Esophagus muscularis mucosa (tissue), 4 donors: ENCODE measurements at regions of chr1 and their contacts with region 1.

Region 1: DNA sequence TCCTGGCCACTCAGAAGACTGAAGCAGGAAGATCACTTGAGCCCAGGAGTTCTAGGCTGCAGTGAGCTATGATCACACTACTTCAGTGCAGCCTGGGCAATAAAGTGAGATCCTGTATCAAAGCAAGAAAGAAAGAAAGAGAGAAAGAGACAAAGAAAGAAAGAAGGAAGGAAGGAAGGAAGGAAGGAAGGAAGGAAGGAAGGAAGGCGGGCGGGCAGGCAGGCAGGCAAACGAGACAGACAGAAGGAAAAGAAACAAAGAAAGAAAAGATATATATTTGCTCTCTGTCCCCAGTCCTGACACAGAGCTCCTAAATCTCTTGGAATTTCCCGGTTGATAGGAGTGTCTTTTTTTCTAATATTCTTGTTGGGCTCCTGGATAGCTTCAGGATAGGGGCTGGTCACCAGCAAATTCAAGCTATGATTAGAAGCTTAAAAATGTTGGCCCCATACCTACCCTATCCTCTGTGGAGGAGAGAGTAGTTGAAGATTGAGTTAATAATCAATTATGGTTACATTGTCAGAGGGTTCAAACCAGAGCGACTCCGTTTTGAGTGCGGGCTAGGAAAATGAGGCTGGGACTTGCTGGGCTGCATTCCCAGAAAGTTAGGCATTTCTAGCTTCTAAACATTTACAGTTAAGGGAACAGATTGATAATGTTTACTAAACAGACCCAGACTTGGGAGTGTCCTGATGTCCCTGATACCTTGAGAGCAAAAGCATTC is 3.3 kb upstream of the MIGA1 start:
- DNase-seq: no peak
- H3K4me3 ChIP-seq: no peak overlapping the region
- H3K27ac ChIP-seq: no peak overlapping the region
- H3K4me1 ChIP-seq: peaks cover 5 to 18% (median 17%) of the 10 kb centered on the region in 4 donors
- H3K27me3 ChIP-seq: no peaks in the 10 kb centered on the region
- CTCF ChIP-seq: no peak
- EP300 ChIP-seq: no peak
- POLR2A ChIP-seq: no peak

Region 2: DNA sequence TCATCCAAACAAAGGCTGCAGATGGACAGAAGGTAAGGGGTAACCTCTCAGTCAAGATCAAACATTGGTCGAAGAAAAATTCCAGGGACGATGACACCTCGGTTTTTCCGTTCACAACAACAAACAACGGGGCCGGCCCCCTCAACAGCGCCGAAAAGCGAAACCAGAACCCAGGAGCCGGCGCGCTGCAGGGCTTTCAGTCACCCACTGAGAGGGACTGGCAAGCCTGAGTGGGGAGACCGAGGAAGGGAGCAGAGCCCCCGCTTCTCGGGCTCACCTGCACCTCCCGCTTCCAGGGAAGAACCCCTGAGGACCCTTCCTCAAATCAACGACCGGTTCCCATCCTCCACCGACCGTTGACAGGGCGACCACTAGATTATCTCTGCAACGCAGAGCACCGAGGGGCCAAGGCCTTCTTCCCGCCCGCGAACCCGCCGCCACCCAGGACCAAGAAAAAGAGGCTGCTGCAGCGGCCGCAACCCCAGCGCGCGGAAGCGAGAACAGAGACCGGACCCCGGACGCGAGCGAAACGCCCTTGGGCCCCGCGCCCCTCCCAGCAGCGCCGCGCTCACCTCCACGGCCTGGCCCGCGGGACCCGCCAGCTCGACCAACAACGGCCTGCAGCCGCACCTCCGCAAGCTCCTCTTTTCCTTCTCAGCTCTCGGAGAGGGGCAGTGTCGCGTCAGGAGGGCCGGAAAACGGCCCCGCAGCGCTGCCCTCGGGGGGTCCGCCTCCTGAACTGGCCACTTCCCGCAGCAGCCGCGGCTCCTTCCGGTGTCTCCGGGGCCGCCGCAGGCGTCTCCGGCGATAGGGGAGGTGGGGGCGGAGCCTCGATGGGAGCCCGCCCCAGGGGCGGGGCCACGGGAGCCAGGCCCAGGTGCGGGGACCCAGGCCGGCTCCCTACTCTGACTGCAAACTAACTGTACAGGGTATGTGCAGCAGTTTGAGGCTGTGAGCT is 16.8 kb before region 1 on chr1 and contains the start of gene USP33:
- intact Hi-C with region 1: loop called (anchors 2 kb)
- DNase-seq: peak; percentile 94
- H3K4me3 ChIP-seq: peak within 1 kb of the TSS; percentile 81 to 97 (median 92)
- H3K27ac ChIP-seq: peak within 1 kb of the TSS; percentile 85 to 95 (median 87)
- H3K4me1 ChIP-seq: peaks cover 18 to 41% (median 35%) of the 10 kb centered on the region in 4 donors
- H3K27me3 ChIP-seq: no peaks in the 10 kb centered on the region
- CTCF ChIP-seq: no peak
- EP300 ChIP-seq: no peak
- POLR2A ChIP-seq: peak; percentile 17
- total RNA-seq, gene USP33: 50.9 to 71.0 (median 59.2) TPM

Region 3: GRCh38 chr1:77906019-77906545 is 129.9 kb after region 1 on chr1:
- intact Hi-C with region 1: no loop called
- DNase-seq: no peak
- H3K4me3 ChIP-seq: no peak overlapping the region
- H3K27ac ChIP-seq: no peak overlapping the region
- H3K4me1 ChIP-seq: peaks cover 4 to 56% (median 49%) of the 10 kb centered on the region in 4 donors
- H3K27me3 ChIP-seq: no peaks in the 10 kb centered on the region
- CTCF ChIP-seq: no peak
- EP300 ChIP-seq: no peak
- POLR2A ChIP-seq: no peak

Region 4: GRCh38 chr1:77948841-77949424 is 172.8 kb after region 1 on chr1:
- intact Hi-C with region 1: no loop called
- DNase-seq: no peak
- H3K4me3 ChIP-seq: no peak overlapping the region
- H3K27ac ChIP-seq: no peak overlapping the region
- H3K4me1 ChIP-seq: peaks cover 9 to 34% (median 32%) of the 10 kb centered on the region in 4 donors
- H3K27me3 ChIP-seq: no peaks in the 10 kb centered on the region
- CTCF ChIP-seq: peak in 2 of 3 experiments; percentile 20 to 32
- EP300 ChIP-seq: no peak
- POLR2A ChIP-seq: no peak